ENCODE measurements at regions of chr5 and their contacts with region 1.

Region 1: DNA sequence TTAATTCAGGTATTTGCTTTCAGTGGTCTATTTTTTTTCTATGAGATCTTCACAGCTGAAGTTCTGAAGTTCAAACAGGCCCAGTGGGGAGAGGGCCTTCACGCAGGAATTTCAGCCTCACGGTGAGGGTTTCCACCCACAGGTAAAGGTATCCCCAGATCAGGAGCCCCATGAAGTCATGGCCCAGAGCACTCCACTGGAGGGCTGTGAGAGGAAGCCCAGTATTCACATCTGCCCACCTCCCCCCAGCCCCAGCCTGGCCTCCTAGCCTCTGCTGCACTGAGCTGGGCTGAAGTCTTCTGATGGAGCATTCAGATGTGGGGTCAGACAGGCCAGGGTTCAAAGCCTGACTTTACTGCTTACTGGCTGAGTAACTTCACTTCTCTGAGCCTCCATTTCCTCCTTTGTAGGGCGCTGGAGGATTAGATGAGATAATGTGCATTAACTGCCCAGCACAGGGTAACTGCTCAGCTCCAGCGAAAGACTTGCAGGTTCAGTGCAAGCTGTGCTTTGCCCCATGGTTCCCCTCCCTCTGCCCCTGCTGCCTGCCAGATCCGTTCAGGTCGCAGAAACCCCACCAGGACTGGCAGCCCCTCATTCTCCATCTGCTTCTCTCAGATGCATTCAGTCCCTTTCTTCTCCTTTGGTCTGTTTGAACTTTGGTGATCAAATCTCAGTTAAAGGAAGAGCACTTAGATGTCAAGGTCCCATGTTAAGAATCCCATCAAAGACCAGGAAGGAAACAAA is 23.1 kb downstream of the AFAP1L1 start:
- DNase-seq: no peak
- ATAC-seq: no peak

Region 2: GRCh38 chr5:149277801-149278200 is 16.9 kb before region 1 on chr5:
- intact Hi-C with region 1: loop called (anchors 2 kb)
- DNase-seq: no peak
- ATAC-seq: no peak

Measured in Right ventricle myocardium inferior (tissue), 1 donor.